Activated CD8-positive, alpha-beta memory T cell treated with anti-CD3 and anti-CD28 coated beads, Interleukin-2, amount 10 ng/mL, durations not matched to agents 7 days and 5 days (primary cell): ENCODE measurements at regions of chr5 and their contacts with region 1.

Region 1: DNA sequence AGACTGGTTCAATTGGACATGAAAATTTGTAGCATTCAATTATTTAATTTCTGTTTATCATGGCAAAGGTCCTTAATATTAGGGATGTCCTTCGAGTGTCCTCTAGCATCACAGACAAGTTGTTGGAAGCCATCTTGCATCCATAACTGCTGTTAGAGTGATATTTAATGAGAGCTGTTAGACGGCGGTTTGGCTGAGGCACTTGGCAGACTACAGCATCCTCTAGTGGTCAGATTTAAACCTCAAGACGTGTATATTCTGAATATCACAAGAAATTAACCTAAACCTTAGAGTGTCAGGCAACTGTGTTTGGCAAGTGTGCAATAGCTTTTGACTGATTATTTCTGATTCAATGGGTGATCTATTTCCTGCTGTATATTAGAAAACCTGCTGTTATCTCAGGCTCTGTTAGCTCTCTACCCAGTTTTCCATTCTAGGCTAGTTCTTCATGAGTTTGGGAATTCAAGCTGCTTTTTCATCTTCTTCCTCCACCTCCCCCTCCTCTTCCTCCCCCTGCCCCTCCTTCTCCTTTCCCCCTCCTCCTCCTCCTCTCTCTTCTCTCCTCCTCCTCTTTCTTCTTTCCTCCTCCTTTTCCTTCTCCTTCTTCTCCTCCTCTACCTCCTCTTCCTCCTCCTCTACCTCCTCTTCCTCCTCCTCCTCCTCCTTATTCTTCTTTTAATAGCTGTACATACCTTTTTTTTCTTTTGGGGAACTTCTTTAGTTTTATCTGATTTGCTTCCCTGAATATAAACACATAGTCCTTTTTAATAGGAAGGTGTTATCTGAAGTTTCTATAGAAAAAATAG is 8.6 kb downstream of the SPINK1 start:
- DNase-seq: peak; percentile 55
- ATAC-seq: peak; percentile 80
- H3K4me3 Mint-ChIP-seq: no peak overlapping the region
- H3K27ac Mint-ChIP-seq: no peak overlapping the region
- H3K4me1 Mint-ChIP-seq: peaks cover 2% of the 10 kb centered on the region
- H3K27me3 Mint-ChIP-seq: peaks cover 3% of the 10 kb centered on the region

Region 2: DNA sequence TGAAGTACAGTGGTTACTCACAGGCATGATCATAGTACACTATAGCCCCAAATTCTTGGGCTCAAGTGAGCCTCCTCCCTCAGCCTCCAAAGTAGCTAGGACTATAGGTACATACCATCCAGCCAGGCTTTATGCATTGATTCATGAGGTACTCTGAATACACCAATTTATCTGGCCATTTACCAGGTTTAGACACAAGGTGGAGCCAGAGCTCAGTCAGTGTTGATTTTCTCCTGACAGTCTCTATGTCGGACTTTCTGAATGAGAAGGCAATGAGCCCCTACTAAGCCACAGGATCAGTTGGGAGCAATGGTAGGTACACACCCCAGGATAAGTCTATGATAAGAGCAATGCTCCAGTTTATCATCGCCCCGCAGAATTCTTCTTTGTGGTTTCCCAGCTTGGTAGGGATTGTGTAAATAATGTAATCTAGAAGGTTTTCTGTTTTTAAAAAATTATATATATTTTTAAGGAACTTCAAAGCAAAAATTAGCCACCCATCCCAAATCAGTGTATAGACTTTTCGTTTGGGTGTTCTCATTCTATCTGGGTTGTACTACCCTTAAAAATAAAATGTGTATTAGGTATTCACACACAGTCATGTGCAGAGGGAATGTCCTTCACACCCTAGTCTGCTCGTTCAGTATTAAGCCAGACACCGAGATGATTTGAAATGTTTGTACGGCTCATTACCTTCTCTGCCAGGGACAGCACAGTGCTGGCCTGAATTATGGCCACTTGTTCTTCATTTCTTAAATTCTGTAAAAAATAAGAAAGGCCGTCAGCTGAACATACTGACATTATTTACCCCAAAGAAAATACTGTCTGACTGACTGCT is 194.6 kb before region 1 on chr5:
- CTCF ChIA-PET with region 1: interaction called, 38 read pairs
- DNase-seq: peak; percentile 68
- ATAC-seq: peak; percentile 68
- H3K4me3 Mint-ChIP-seq: no peak overlapping the region
- H3K27ac Mint-ChIP-seq: no peak overlapping the region
- H3K4me1 Mint-ChIP-seq: no peaks in the 10 kb centered on the region
- H3K27me3 Mint-ChIP-seq: no peaks in the 10 kb centered on the region